ENCODE measurements at regions of chr5 and their contacts with region 1.

Region 1: DNA sequence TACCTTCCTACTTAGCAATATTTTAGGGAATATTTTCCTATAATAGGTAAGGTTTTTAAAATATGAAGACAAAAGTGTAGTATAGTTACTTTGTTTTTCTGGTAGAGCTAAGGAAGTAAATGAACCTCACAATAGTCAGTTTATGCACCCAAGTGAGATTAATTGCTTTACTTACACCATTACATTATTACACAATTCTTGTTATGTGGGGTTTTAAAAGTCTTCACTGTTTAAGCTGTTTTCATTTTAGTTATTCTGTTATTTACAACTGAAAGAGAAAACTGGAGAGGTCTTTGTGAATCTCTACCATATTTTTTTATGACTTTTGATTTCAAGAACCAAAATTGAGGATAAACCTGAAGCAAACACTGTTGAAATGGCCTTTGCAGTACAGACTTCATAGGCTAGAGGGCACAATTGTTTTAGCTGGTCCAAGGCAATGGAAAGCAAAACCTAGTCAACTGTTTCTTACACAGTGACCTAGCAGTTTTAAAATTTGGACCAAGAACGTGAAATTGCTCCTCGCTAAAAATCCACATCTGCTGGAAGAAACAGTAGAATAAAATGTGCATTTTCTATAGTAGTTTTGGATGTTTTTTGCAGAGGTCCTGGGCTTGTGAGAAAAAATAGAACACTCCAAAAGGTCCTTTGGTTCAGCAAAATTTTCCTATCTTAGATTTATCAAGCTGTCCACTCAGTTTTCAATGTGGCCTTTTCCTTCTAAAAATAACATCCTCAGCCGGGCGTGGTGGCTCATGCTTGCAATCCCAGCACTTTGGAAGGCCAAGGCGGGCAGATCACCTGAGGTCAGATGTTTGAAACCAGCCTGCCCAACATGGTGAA is 66.4 kb upstream of the FER start:
- DNase-seq: no peak
- H3K4me3 ChIP-seq: peak overlapping the region in 1 of 3 donors; percentile 36
- H3K27ac ChIP-seq: no peak overlapping the region
- H3K4me1 ChIP-seq: no peaks in the 10 kb centered on the region
- H3K27me3 ChIP-seq: no peaks in the 10 kb centered on the region
- CTCF ChIP-seq: peak; percentile 60 to 77 (median 68)
- POLR2A ChIP-seq: no peak

Region 2: DNA sequence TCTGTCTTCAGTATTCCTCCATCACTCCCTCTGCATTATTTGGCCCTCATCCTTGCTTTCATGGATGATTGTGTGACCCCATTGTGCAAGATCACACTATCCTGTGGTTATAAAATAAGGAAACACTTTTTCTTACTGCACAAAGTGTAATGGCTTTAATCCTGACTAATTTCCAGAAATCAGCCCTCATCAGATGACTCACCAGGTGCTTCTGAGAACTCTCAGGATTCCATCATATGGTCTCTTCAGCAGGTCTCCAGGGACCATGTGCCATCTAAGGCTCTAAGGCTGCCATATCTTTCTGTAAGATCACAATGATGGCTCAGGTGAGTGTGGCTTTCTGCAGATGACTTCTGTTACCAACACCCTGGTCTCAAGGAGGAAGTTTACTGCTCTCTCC is 39.1 kb after region 1 on chr5:
- intact Hi-C with region 1: no loop called
- DNase-seq: no peak
- H3K4me3 ChIP-seq: no peak overlapping the region
- H3K27ac ChIP-seq: no peak overlapping the region
- H3K4me1 ChIP-seq: no peaks in the 10 kb centered on the region
- H3K27me3 ChIP-seq: no peaks in the 10 kb centered on the region
- CTCF ChIP-seq: no peak
- POLR2A ChIP-seq: no peak

Region 3: DNA sequence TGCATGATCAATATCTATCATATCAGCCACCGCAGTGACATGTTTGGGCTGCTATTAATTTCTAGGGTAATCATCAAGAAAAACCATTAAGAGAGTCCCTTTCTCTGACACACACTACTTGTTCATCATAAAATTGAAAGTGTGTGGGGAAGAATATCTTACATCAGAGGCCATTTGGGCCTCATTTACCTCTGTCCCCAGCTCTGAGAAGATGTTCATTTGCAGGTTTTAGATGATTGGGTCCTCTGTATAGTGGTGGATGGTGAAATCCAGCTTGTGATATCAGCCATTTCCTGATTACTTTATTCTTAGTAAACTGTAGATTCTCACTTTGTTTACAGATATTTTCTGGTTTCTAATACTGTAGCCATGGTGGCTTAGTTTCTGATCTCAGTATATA is 758.3 kb after region 1 on chr5:
- intact Hi-C with region 1: loop called (anchors 10 kb)
- DNase-seq: no peak
- H3K4me3 ChIP-seq: no peak overlapping the region
- H3K27ac ChIP-seq: no peak overlapping the region
- H3K4me1 ChIP-seq: no peaks in the 10 kb centered on the region
- H3K27me3 ChIP-seq: no peaks in the 10 kb centered on the region
- CTCF ChIP-seq: no peak
- POLR2A ChIP-seq: no peak